Mucosa of descending colon (tissue), 3 donors: ENCODE measurements at regions of chr17 and their contacts with region 1.

Region 1: GRCh38 chr17:38349097-38349730 is 2.4 kb upstream of the SOCS7 start:
- DNase-seq: peak; percentile 76 to 95 (median 92)
- ATAC-seq: peak; percentile 63
- H3K4me3 ChIP-seq: no peak overlapping the region
- H3K4me1 ChIP-seq: peaks cover 10% of the 10 kb centered on the region
- CTCF ChIP-seq: peak; percentile 92

Region 2: DNA sequence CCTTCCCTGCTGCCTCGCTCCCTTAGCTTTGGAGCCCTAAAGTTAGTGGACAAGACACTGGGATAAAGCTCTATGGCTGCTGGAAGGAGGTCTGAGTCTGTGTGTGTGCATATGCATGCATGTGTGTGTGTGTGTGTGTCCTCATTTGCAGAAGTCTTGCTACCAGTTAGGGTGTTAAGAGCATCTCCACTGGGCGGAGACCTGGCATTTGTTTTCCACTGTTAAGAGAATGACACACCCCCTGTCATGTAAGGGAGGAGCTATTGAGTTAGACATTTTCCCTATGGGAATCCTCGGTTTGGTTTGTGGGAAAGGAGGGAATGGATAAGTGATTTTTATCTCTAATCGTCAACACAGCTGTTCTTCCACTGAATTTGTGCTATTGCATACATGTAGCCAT is 54.3 kb after region 1 on chr17:
- intact Hi-C with region 1: loop called in 1 of 2 experiments (anchors 10 kb)
- DNase-seq: peak in 1 of 3 donors; percentile 28
- ATAC-seq: peak; percentile 30
- H3K4me3 ChIP-seq: no peak overlapping the region
- H3K4me1 ChIP-seq: no peaks in the 10 kb centered on the region
- CTCF ChIP-seq: no peak

Region 3: DNA sequence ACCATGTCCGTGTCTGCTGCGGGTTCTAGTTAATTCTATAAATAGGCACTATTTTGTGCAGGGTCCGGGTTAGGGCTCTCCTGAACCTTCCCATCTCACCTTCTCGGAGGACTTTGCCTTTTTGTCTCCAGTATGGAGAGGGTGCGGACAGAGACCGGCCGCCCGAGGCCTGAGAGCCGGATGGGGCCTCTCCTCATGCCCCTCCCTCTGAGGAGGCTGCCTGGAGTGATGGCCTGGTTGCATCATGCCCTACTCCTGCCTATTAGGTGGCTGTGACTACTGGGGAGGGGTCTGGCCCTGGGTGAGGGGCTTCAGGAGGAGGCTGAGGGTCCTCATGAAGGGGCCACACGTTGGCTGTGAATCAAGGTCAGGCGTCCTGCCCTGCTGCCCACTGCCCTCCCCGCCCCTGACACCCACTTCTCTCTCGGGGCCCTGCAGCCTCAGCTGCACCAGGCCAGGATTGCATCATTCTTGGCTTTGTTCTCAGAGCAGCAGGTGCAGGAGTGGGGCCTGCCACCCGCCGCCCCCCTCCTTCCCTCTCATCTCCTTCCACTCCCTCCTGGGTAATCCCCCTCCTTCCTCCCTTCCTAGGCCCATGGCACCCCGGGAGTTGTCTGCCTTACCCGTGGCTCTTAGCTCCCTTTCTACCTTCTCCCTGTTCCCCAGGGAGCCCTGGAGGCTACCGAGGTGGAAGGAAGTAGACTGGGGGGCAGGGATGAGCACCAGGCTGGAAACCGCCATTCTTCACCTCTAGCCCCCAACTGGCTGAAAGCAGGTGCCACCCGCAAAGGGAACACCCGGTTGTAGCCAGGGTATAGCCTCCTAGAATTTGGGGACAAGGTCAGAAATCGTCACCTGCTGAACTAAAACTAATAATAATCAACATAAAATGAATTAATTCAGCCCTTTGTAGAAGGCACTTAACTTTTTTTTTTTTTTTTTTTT is 66.3 kb after region 1 on chr17:
- intact Hi-C with region 1: loop called in 1 of 2 experiments (anchors 2 kb)
- DNase-seq: no peak
- ATAC-seq: peak; percentile 57
- H3K4me3 ChIP-seq: no peak overlapping the region
- H3K4me1 ChIP-seq: peaks cover 4% of the 10 kb centered on the region
- CTCF ChIP-seq: no peak

Region 4: GRCh38 chr17:38428112-38428642 is 79.0 kb after region 1 on chr17 and contains the start of gene ARHGAP23:
- intact Hi-C with region 1: no loop called
- DNase-seq: peak in 2 of 3 donors; percentile 25 to 58
- ATAC-seq: peak; percentile 66
- H3K4me3 ChIP-seq: peak within 1 kb of the TSS; percentile 30
- H3K4me1 ChIP-seq: peaks cover 11% of the 10 kb centered on the region
- CTCF ChIP-seq: no peak
- total RNA-seq, gene ARHGAP23: 6.1 to 44.6 (median 12.6) TPM

Region 5: GRCh38 chr17:38512473-38513058 is 163.4 kb after region 1 on chr17:
- intact Hi-C with region 1: no loop called
- DNase-seq: no peak
- ATAC-seq: no peak
- H3K4me3 ChIP-seq: no peak overlapping the region
- H3K4me1 ChIP-seq: peaks cover 13% of the 10 kb centered on the region
- CTCF ChIP-seq: no peak

Region 6: GRCh38 chr17:38768417-38768816 is 419.2 kb after region 1 on chr17:
- intact Hi-C with region 1: no loop called
- DNase-seq: no peak
- ATAC-seq: no peak
- H3K4me3 ChIP-seq: no peak overlapping the region
- H3K4me1 ChIP-seq: no peaks in the 10 kb centered on the region
- CTCF ChIP-seq: no peak